Endothelial cell of umbilical vein (primary cell): ENCODE measurements at regions of chr4 and their contacts with region 1.

Region 1: GRCh38 chr4:56799824-56800756 is 21.4 kb downstream of the SPINK2 start:
- DNase-seq: peak; percentile 87
- H3K4me3 ChIP-seq: peak overlapping the region; percentile 54 to 99 (median 92)
- H3K27ac ChIP-seq: peak overlapping the region; percentile 49
- H3K4me1 ChIP-seq: no peaks in the 10 kb centered on the region
- H3K27me3 ChIP-seq: no peaks in the 10 kb centered on the region
- CTCF ChIP-seq: peak; percentile 86 to 94
- POLR2A ChIP-seq: no peak

Region 2: DNA sequence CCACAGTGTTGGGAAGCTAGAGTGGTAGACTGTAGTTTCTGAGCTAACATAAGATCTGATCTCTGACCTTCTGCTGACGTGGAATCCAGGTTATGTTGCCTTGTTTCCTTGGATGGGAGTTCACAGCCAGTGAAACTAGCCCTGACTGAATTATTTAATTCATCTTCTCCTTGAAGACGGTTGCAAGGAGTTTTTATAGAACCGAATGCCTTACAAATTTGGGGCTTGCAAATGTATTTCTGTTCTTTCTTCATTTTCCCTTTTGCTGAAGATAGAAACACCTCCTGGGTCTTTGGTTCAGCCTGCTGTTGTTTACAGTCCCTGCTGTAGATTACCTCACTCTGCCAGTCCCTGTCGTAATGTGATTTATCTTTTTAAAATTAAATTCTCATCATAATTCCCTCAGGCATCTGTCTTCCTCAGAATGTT is 737.5 kb before region 1 on chr4:
- CTCF ChIA-PET with region 1: no interaction called
- POLR2A ChIA-PET with region 1: no interaction called
- dilution Hi-C with region 1: no loop called
- intact Hi-C with region 1: no loop called
- DNase-seq: no peak
- H3K4me3 ChIP-seq: no peak overlapping the region
- H3K27ac ChIP-seq: no peak overlapping the region
- H3K4me1 ChIP-seq: no peaks in the 10 kb centered on the region
- H3K27me3 ChIP-seq: peaks cover 0 to 1% of the 10 kb centered on the region in 2 experiments
- CTCF ChIP-seq: no peak
- POLR2A ChIP-seq: no peak

Region 3: GRCh38 chr4:56505269-56506130 is 294.6 kb before region 1 on chr4 and contains the start of gene ARL9:
- CTCF ChIA-PET with region 1: interaction called, 9 read pairs
- POLR2A ChIA-PET with region 1: no interaction called
- dilution Hi-C with region 1: no loop called
- intact Hi-C with region 1: loop called (anchors 1 kb)
- DNase-seq: peak; percentile 61
- H3K4me3 ChIP-seq: peak within 1 kb of the TSS; percentile 48 to 69 (median 67)
- H3K27ac ChIP-seq: no peak within 1 kb of the TSS
- H3K4me1 ChIP-seq: peaks cover 13% of the 10 kb centered on the region
- H3K27me3 ChIP-seq: no peaks in the 10 kb centered on the region
- CTCF ChIP-seq: no peak
- POLR2A ChIP-seq: no peak
- total RNA-seq, gene ARL9: 0.51 and 1.1 TPM in 2 replicates

Region 4: DNA sequence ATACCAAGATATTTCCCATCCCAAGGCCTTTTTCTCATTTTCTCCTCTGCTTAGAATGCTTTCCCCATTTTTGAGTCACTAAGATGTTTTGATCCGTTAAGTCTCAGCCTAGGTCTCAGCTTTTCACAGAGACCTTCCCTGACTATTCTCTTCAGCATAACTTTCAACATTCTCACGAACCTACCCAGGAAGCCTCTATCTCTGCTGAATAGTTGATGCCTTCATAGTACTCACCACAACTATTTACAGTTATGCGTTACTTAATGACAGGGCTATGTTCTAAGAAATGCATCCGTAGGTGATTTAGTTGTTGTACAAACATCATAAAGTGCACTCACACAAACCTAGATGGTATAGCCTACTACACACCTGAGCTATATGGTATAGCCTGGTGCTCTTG is 230.0 kb before region 1 on chr4:
- CTCF ChIA-PET with region 1: interaction called, 121 read pairs
- POLR2A ChIA-PET with region 1: no interaction called
- dilution Hi-C with region 1: no loop called
- intact Hi-C with region 1: loop called (anchors 1 kb)
- DNase-seq: no peak
- H3K4me3 ChIP-seq: no peak overlapping the region
- H3K27ac ChIP-seq: no peak overlapping the region
- H3K4me1 ChIP-seq: no peaks in the 10 kb centered on the region
- H3K27me3 ChIP-seq: no peaks in the 10 kb centered on the region
- CTCF ChIP-seq: no peak
- POLR2A ChIP-seq: no peak

Region 5: GRCh38 chr4:56626963-56627362 is 173.1 kb before region 1 on chr4:
- CTCF ChIA-PET with region 1: interaction called, 69 read pairs
- POLR2A ChIA-PET with region 1: no interaction called
- dilution Hi-C with region 1: no loop called
- intact Hi-C with region 1: loop called (anchors 1 kb)
- DNase-seq: peak; percentile 4
- H3K4me3 ChIP-seq: no peak overlapping the region
- H3K27ac ChIP-seq: no peak overlapping the region
- H3K4me1 ChIP-seq: no peaks in the 10 kb centered on the region
- H3K27me3 ChIP-seq: no peaks in the 10 kb centered on the region
- CTCF ChIP-seq: peak in 1 of 2 donors; percentile 17
- POLR2A ChIP-seq: no peak

Region 6: DNA sequence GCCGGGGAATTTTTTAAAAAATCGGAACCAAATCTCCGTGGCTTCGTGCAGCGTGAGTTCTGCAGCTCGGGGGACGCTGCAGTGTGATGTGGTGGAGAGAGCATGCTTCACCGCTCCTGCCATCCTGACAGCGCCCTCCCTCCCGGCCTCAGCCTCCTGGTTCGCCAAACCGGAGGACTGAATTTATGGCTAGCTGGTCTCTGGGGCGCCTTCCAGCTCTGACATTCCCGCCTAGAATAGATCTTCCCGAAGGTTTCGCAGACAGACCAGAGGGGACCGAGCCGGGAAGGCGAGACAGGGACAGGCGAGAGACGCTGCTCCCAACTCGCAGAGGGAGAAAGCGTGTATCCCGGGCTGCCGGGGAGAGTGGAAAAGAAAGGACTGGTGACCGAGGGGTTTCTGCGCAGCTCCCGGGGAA is 144.9 kb before region 1 on chr4:
- CTCF ChIA-PET with region 1: interaction called, 18 read pairs
- POLR2A ChIA-PET with region 1: no interaction called
- dilution Hi-C with region 1: no loop called
- intact Hi-C with region 1: no loop called
- DNase-seq: no peak
- H3K4me3 ChIP-seq: peak overlapping the region; percentile 54 to 71 (median 54)
- H3K27ac ChIP-seq: no peak overlapping the region
- H3K4me1 ChIP-seq: peaks cover 22% of the 10 kb centered on the region
- H3K27me3 ChIP-seq: peaks cover 0 to 9% of the 10 kb centered on the region in 2 experiments
- CTCF ChIP-seq: no peak
- POLR2A ChIP-seq: no peak

Region 7: DNA sequence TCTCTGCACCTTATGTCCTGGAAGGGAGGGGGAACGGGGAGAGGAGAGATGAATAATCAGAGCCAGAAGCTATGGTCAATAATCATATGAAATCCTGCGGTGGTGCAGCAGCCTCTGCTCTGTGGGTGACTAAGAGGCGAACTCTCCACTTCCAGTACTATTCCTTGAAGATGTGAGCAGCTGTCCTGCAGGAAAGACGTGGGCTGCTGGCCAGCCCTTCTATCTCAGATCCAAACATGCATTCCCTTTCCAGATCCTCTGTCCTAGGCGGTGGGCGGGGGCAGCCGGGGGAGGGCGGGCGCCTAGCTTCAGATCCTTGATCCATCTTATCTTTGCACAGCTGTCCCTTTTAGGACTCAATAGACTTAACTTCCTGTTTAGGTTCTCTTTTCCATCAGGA is 13.1 kb before region 1 on chr4:
- CTCF ChIA-PET with region 1: interaction called, 14 read pairs
- POLR2A ChIA-PET with region 1: no interaction called
- dilution Hi-C with region 1: no loop called
- intact Hi-C with region 1: no loop called
- DNase-seq: peak; percentile 17
- H3K4me3 ChIP-seq: no peak overlapping the region
- H3K27ac ChIP-seq: no peak overlapping the region
- H3K4me1 ChIP-seq: no peaks in the 10 kb centered on the region
- H3K27me3 ChIP-seq: no peaks in the 10 kb centered on the region
- CTCF ChIP-seq: no peak
- POLR2A ChIP-seq: no peak